ENCODE measurements at regions of chr18 and their contacts with region 1.

Region 1: GRCh38 chr18:3665780-3666525 is 216.0 kb downstream of the TGIF1 start:
- DNase-seq: peak; percentile 86 to 87 (median 86)
- ATAC-seq: peak; percentile 96
- H3K4me3 ChIP-seq: no peak overlapping the region
- H3K27ac ChIP-seq: peak overlapping the region; percentile 63 to 79 (median 67)
- H3K4me1 ChIP-seq: peaks cover 9% of the 10 kb centered on the region
- H3K27me3 ChIP-seq: no peaks in the 10 kb centered on the region
- CTCF ChIP-seq: peak; percentile 85 to 98 (median 96)
- POLR2A ChIP-seq: peak in 1 of 3 donors; percentile 32

Region 2: GRCh38 chr18:3451183-3451988 is 214.6 kb before region 1 on chr18:
- intact Hi-C with region 1: loop called (anchors 10 kb)
- DNase-seq: peak; percentile 92 to 95 (median 94)
- ATAC-seq: peak; percentile 28
- H3K4me3 ChIP-seq: peak overlapping the region; percentile 37 to 56
- H3K27ac ChIP-seq: peak overlapping the region; percentile 95 to 99 (median 98)
- H3K4me1 ChIP-seq: peaks cover 51% of the 10 kb centered on the region
- H3K27me3 ChIP-seq: no peaks in the 10 kb centered on the region
- CTCF ChIP-seq: no peak
- POLR2A ChIP-seq: peak; percentile 72 to 93 (median 91)

Region 3: DNA sequence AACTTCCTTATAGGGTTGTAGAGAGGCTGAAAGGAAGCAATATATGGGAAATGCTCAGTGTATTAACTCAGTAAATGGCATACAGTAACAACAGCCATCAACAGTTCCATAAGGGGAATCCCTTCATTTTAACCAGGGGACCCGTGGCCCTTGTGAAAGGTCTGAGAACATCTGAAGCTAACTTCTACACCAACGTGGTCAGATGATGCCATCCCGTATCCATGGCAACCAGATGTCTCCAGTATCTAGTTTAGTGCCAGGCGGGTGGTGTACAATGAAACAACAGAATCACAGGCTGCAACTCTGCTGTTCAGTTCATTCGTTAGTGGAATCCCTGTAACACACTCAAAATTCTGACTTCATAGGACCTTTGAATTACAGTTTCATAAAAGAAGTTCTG is 53.6 kb before region 1 on chr18:
- intact Hi-C with region 1: no loop called
- DNase-seq: no peak
- ATAC-seq: no peak
- H3K4me3 ChIP-seq: no peak overlapping the region
- H3K27ac ChIP-seq: no peak overlapping the region
- H3K4me1 ChIP-seq: no peaks in the 10 kb centered on the region
- H3K27me3 ChIP-seq: no peaks in the 10 kb centered on the region
- CTCF ChIP-seq: no peak
- POLR2A ChIP-seq: no peak

Measured in body of pancreas (tissue), 4 donors.